ENCODE measurements at regions of chr1 and their contacts with region 1.

Region 1: DNA sequence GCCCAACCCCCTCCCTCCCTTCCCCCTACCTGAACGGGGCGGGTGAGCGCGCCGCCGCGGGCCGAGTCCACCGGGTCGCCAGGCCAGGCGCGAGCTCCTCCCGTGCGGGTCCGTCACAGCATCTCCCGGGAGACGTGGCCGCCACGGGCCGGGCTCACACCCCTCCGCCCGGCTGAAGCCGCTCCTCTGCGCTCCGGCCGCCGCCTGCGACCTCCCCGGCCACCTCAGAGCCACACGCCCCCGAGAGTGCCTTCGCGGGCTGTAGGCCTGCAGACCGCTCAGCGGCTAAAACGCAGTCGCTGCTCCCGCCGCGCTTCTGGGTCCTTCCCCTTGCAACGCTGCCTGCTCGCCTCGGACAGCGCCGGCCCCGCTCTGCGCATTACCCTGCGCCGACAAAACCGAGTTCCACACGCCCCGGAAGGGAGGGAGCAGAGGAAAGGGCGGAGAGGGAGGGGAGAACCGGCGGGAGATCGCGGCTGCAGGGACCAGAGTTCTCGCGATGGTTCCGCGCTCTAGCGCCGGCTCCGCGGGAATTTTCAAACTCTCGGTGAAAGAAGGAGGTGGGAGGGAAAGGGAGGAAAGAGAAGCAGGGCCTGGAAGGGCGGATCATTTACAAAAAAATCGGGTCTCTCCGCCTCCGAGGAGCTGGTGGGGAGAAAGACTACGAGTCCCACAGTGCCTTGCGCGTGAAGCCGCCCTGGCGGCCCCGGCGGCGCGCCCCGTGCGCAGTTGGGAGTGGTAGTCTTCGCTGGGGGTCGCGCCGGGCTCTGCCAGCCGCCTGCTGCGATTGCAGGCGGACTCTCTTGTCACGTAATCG is at the start of gene AHCTF1:
- DNase-seq: peak; percentile 97
- ATAC-seq: peak; percentile 86
- H3K4me3 ChIP-seq: peak within 1 kb of the TSS; percentile 85 to 96 (median 88)
- H3K4me3 Mint-ChIP-seq: peak within 1 kb of the TSS; percentile 98
- H3K27ac ChIP-seq: peak within 1 kb of the TSS; percentile 87 to 93
- H3K27ac Mint-ChIP-seq: peak within 1 kb of the TSS; percentile 98
- H3K4me1 ChIP-seq: peaks cover 12 to 18% of the 10 kb centered on the region in 2 donors
- H3K4me1 Mint-ChIP-seq: peaks cover 33% of the 10 kb centered on the region
- H3K27me3 ChIP-seq: no peaks in the 10 kb centered on the region
- H3K27me3 Mint-ChIP-seq: no peaks in the 10 kb centered on the region
- CTCF ChIP-seq: no peak
- total RNA-seq, gene AHCTF1: 34.8 and 43.1 TPM in 2 replicates

Region 2: GRCh38 chr1:246699095-246699735 is 232.5 kb before region 1 on chr1:
- CTCF ChIA-PET with region 1: no interaction called
- POLR2A ChIA-PET with region 1: no interaction called
- intact Hi-C with region 1: loop called (anchors 5 kb)
- DNase-seq: peak; percentile 89
- ATAC-seq: peak; percentile 88
- H3K4me3 ChIP-seq: peak overlapping the region in 3 of 5 experiments; percentile 31 to 55 (median 52)
- H3K4me3 Mint-ChIP-seq: peak overlapping the region; percentile 26
- H3K27ac ChIP-seq: peak overlapping the region in 1 of 2 donors; percentile 50
- H3K27ac Mint-ChIP-seq: peak overlapping the region; percentile 1
- H3K4me1 ChIP-seq: peaks cover 6 to 15% of the 10 kb centered on the region in 2 donors
- H3K4me1 Mint-ChIP-seq: peaks cover 7% of the 10 kb centered on the region
- H3K27me3 ChIP-seq: no peaks in the 10 kb centered on the region
- H3K27me3 Mint-ChIP-seq: no peaks in the 10 kb centered on the region
- CTCF ChIP-seq: peak; percentile 80

Region 3: GRCh38 chr1:247078261-247079140 is 146.7 kb after region 1 on chr1 and contains the start of gene ZNF670:
- CTCF ChIA-PET with region 1: no interaction called
- POLR2A ChIA-PET with region 1: interaction called, 5 read pairs
- intact Hi-C with region 1: loop called (anchors 1 kb)
- DNase-seq: peak; percentile 86
- ATAC-seq: peak; percentile 98
- H3K4me3 ChIP-seq: peak within 1 kb of the TSS; percentile 60 to 99 (median 93)
- H3K4me3 Mint-ChIP-seq: peak within 1 kb of the TSS; percentile 93
- H3K27ac ChIP-seq: peak within 1 kb of the TSS; percentile 61 to 80
- H3K27ac Mint-ChIP-seq: peak within 1 kb of the TSS; percentile 79
- H3K4me1 ChIP-seq: peaks cover 11 to 20% of the 10 kb centered on the region in 2 donors
- H3K4me1 Mint-ChIP-seq: peaks cover 25% of the 10 kb centered on the region
- H3K27me3 ChIP-seq: no peaks in the 10 kb centered on the region
- H3K27me3 Mint-ChIP-seq: peaks cover 3% of the 10 kb centered on the region
- CTCF ChIP-seq: no peak
- total RNA-seq, gene ZNF670: 4.4 and 4.6 TPM in 2 replicates

Region 4: GRCh38 chr1:247210376-247211117 is 278.8 kb after region 1 on chr1:
- CTCF ChIA-PET with region 1: no interaction called
- POLR2A ChIA-PET with region 1: no interaction called
- intact Hi-C with region 1: loop called (anchors 1 kb)
- DNase-seq: peak; percentile 96
- ATAC-seq: peak; percentile 99
- H3K4me3 ChIP-seq: peak overlapping the region; percentile 72 to 91 (median 79)
- H3K4me3 Mint-ChIP-seq: peak overlapping the region; percentile 95
- H3K27ac ChIP-seq: peak overlapping the region; percentile 85 to 87
- H3K27ac Mint-ChIP-seq: peak overlapping the region; percentile 96
- H3K4me1 ChIP-seq: peaks cover 38 to 41% of the 10 kb centered on the region in 2 donors
- H3K4me1 Mint-ChIP-seq: peaks cover 58% of the 10 kb centered on the region
- H3K27me3 ChIP-seq: no peaks in the 10 kb centered on the region
- H3K27me3 Mint-ChIP-seq: no peaks in the 10 kb centered on the region
- CTCF ChIP-seq: no peak